Naive thymus-derived CD4-positive, alpha-beta T cell (primary cell): ENCODE measurements at regions of chr4 and their contacts with region 1.

Region 1: GRCh38 chr4:184417802-184418511 is 56.4 kb downstream of the IRF2 start:
- DNase-seq: peak in 2 of 9 donors; percentile 26 to 31
- ATAC-seq: peak; percentile 69
- H3K4me3 ChIP-seq: peak overlapping the region; percentile 64
- H3K4me3 Mint-ChIP-seq: peak overlapping the region; percentile 23 to 94 (median 82)
- H3K27ac ChIP-seq: peak overlapping the region; percentile 74
- H3K27ac Mint-ChIP-seq: peak overlapping the region; percentile 82 to 97 (median 95)
- H3K4me1 ChIP-seq: peaks cover 35 to 52% of the 10 kb centered on the region in 2 donors
- H3K4me1 Mint-ChIP-seq: peaks cover 43 to 80% (median 77%) of the 10 kb centered on the region in 7 donors
- H3K27me3 ChIP-seq: no peaks in the 10 kb centered on the region
- H3K27me3 Mint-ChIP-seq: no peaks in the 10 kb centered on the region

Region 2: DNA sequence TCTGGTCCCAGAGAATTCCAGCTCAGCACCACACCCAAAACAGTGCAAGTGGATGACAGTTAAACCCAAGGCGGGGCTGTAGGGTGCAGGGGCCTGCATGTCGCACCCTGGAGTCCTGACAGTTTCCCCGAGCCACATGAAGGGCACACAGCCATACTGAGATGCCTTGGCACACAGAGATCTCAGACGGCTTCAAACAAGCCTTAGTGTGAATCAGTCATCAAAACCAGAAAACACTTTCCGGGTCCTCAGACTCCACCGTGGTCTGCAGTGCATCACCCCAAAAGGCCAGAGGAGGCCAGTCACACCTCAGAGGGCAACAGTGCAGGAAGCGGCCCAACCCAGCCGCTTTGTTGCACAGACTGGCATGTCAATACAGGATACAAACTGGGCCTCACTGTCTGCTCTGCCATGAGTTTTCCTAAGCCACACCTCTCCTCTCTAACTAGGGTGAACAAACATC is 135.7 kb before region 1 on chr4:
- CTCF ChIA-PET with region 1: no interaction called
- POLR2A ChIA-PET with region 1: no interaction called
- intact Hi-C with region 1: loop called in 1 of 2 experiments (anchors 2 kb)
- DNase-seq: peak in 5 of 9 donors; percentile 8 to 56 (median 25)
- ATAC-seq: peak; percentile 75
- H3K4me3 ChIP-seq: no peak overlapping the region
- H3K4me3 Mint-ChIP-seq: peak overlapping the region in 2 of 10 donors; percentile 1 to 25
- H3K27ac ChIP-seq: no peak overlapping the region
- H3K27ac Mint-ChIP-seq: peak overlapping the region in 8 of 9 donors; percentile 17 to 90 (median 64)
- H3K4me1 ChIP-seq: peaks cover 24 to 35% of the 10 kb centered on the region in 2 donors
- H3K4me1 Mint-ChIP-seq: peaks cover 22 to 50% (median 38%) of the 10 kb centered on the region in 7 donors
- H3K27me3 ChIP-seq: no peaks in the 10 kb centered on the region
- H3K27me3 Mint-ChIP-seq: no peaks in the 10 kb centered on the region

Region 3: GRCh38 chr4:184343502-184344177 is 74.3 kb before region 1 on chr4:
- CTCF ChIA-PET with region 1: no interaction called
- POLR2A ChIA-PET with region 1: no interaction called
- intact Hi-C with region 1: loop called in 1 of 2 experiments (anchors 5 kb)
- DNase-seq: peak in 7 of 9 donors; percentile 18 to 59 (median 46)
- ATAC-seq: peak; percentile 59
- H3K4me3 ChIP-seq: peak overlapping the region; percentile 69
- H3K4me3 Mint-ChIP-seq: peak overlapping the region; percentile 74 to 92 (median 87)
- H3K27ac ChIP-seq: peak overlapping the region; percentile 4
- H3K27ac Mint-ChIP-seq: peak overlapping the region; percentile 40 to 88 (median 53)
- H3K4me1 ChIP-seq: no peaks in the 10 kb centered on the region
- H3K4me1 Mint-ChIP-seq: peaks cover 0 to 32% (median 16%) of the 10 kb centered on the region in 7 donors
- H3K27me3 ChIP-seq: no peaks in the 10 kb centered on the region
- H3K27me3 Mint-ChIP-seq: no peaks in the 10 kb centered on the region

Region 4: DNA sequence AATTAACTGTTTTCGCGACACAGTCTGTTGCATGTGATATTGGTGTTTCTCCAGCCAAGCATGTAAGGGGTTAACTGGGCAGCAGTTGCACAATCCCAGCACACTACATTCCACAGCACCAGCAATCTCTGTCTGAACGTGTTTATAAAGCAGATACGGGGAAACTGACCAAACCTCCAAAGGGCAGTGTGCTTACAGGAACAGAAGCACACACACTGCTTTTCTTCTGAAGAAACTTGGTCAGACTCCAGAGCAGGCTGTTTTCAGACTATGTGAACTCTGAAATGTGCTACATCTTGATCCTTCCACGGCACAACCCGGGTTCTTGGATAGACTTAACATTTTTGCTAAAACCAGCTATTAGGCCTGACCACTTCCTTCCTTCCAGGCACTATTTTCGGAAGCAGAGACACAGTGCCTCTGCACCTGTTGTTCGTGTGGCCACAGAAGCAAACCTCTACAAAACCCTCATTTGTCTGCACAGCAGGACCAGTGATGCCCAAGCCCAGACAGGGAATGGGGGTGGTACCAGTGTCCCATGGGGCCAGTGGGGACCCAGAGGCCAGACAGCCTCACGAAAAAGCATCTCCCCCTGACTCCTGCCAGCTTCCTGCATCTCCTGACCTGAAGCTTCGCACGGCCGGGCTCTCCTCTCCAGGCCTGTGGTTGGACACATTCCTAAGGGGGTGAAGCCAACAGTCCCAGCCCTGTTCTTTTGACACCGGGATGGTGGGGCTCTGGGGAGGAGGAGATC is 33.7 kb before region 1 on chr4:
- CTCF ChIA-PET with region 1: no interaction called
- POLR2A ChIA-PET with region 1: no interaction called
- intact Hi-C with region 1: loop called in 1 of 2 experiments (anchors 5 kb)
- DNase-seq: peak in 1 of 9 donors; percentile 3
- ATAC-seq: peak; percentile 26
- H3K4me3 ChIP-seq: no peak overlapping the region
- H3K4me3 Mint-ChIP-seq: peak overlapping the region in 9 of 10 donors; percentile 8 to 68 (median 29)
- H3K27ac ChIP-seq: no peak overlapping the region
- H3K27ac Mint-ChIP-seq: peak overlapping the region in 8 of 9 donors; percentile 3 to 86 (median 60)
- H3K4me1 ChIP-seq: peaks cover 24 to 40% of the 10 kb centered on the region in 2 donors
- H3K4me1 Mint-ChIP-seq: peaks cover 41 to 73% (median 63%) of the 10 kb centered on the region in 7 donors
- H3K27me3 ChIP-seq: no peaks in the 10 kb centered on the region
- H3K27me3 Mint-ChIP-seq: no peaks in the 10 kb centered on the region

Region 5: GRCh38 chr4:184453365-184454160 is 35.6 kb after region 1 on chr4:
- CTCF ChIA-PET with region 1: no interaction called
- POLR2A ChIA-PET with region 1: interaction called, 3 read pairs
- intact Hi-C with region 1: loop called (anchors 2 to 5 kb)
- DNase-seq: peak in 8 of 9 donors; percentile 14 to 82 (median 66)
- ATAC-seq: peak; percentile 98
- H3K4me3 ChIP-seq: peak overlapping the region; percentile 10
- H3K4me3 Mint-ChIP-seq: peak overlapping the region; percentile 22 to 86 (median 70)
- H3K27ac ChIP-seq: peak overlapping the region; percentile 65
- H3K27ac Mint-ChIP-seq: peak overlapping the region; percentile 65 to 98 (median 95)
- H3K4me1 ChIP-seq: peaks cover 18 to 24% of the 10 kb centered on the region in 2 donors
- H3K4me1 Mint-ChIP-seq: peaks cover 70 to 96% (median 88%) of the 10 kb centered on the region in 7 donors
- H3K27me3 ChIP-seq: no peaks in the 10 kb centered on the region
- H3K27me3 Mint-ChIP-seq: no peaks in the 10 kb centered on the region

Region 6: GRCh38 chr4:184460499-184461285 is 42.7 kb after region 1 on chr4:
- CTCF ChIA-PET with region 1: no interaction called
- POLR2A ChIA-PET with region 1: no interaction called
- intact Hi-C with region 1: loop called in 1 of 2 experiments (anchors 2 kb)
- DNase-seq: no peak
- ATAC-seq: peak; percentile 56
- H3K4me3 ChIP-seq: no peak overlapping the region
- H3K4me3 Mint-ChIP-seq: peak overlapping the region in 9 of 10 donors; percentile 6 to 75 (median 53)
- H3K27ac ChIP-seq: peak overlapping the region; percentile 30
- H3K27ac Mint-ChIP-seq: peak overlapping the region in 7 of 9 donors; percentile 55 to 91 (median 84)
- H3K4me1 ChIP-seq: peaks cover 12 to 16% of the 10 kb centered on the region in 2 donors
- H3K4me1 Mint-ChIP-seq: peaks cover 70 to 98% (median 84%) of the 10 kb centered on the region in 7 donors
- H3K27me3 ChIP-seq: no peaks in the 10 kb centered on the region
- H3K27me3 Mint-ChIP-seq: no peaks in the 10 kb centered on the region

Region 7: DNA sequence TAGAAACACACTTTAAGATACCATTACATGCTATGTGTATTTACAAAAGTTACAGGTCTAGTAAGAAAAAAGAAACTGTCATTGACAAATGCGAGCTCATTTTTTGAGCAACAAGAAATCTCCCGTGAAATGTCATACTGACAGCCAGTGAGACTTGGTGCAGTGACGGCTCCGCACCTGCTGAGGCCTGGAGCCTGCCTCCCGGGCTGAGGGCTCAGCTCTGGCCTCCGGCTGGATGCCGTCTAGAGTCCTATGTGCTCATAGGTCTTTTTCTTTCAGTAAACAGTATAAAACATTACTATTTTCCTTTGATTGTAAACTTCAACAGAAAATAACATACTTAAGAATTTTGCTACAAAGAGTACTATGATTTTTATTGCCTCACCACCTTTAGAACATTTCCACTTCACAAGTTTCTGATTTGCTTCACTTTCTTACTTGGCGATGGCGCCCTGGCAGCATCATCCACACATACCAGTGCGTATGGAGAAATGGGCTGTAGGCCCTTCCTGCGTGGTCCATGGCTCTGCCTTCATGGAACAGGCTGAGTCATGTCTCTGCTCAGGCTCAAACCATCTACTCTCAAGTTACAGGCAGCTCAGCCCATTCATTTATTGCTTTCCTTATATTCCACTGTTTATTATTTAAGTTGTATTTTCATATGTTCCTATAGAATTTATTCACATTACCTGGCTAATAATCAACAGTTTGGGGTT is 210.0 kb after region 1 on chr4:
- CTCF ChIA-PET with region 1: no interaction called
- POLR2A ChIA-PET with region 1: no interaction called
- intact Hi-C with region 1: no loop called
- DNase-seq: no peak
- ATAC-seq: no peak
- H3K4me3 ChIP-seq: no peak overlapping the region
- H3K4me3 Mint-ChIP-seq: peak overlapping the region in 1 of 10 donors; percentile 70
- H3K27ac ChIP-seq: no peak overlapping the region
- H3K27ac Mint-ChIP-seq: peak overlapping the region in 4 of 9 donors; percentile 20 to 69 (median 52)
- H3K4me1 ChIP-seq: peaks cover 14 to 28% of the 10 kb centered on the region in 2 donors
- H3K4me1 Mint-ChIP-seq: peaks cover 33 to 52% (median 45%) of the 10 kb centered on the region in 7 donors
- H3K27me3 ChIP-seq: no peaks in the 10 kb centered on the region
- H3K27me3 Mint-ChIP-seq: no peaks in the 10 kb centered on the region

Region 8: DNA sequence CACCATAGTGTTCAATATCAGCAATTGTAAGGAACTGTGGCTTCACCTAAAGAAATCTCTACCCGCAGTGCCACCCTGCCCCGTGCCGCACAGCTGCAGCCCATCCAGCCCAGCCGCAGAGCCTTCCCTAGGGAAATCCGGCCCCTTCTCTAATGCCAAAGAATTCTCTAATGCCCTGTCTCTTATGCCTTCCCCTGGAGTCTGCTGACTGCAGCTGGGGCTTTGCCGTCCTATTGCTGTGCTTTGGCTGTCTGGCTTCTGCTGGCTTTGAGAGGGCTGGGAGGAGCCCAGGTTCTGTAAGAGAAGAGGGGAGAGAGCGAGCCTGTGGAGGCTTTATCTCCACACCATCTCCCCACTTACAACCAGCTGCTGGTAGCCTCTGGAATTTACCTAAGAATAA is 514.4 kb after region 1 on chr4:
- CTCF ChIA-PET with region 1: no interaction called
- POLR2A ChIA-PET with region 1: no interaction called
- intact Hi-C with region 1: no loop called
- DNase-seq: no peak
- ATAC-seq: no peak
- H3K4me3 ChIP-seq: no peak overlapping the region
- H3K4me3 Mint-ChIP-seq: no peak overlapping the region
- H3K27ac ChIP-seq: no peak overlapping the region
- H3K27ac Mint-ChIP-seq: no peak overlapping the region
- H3K4me1 ChIP-seq: no peaks in the 10 kb centered on the region
- H3K4me1 Mint-ChIP-seq: peaks cover 0 to 9% (median 0%) of the 10 kb centered on the region in 7 donors
- H3K27me3 ChIP-seq: no peaks in the 10 kb centered on the region
- H3K27me3 Mint-ChIP-seq: peaks cover 5 to 20% (median 13%) of the 10 kb centered on the region in 5 donors